Activated CD4-positive, alpha-beta memory T cell treated with anti-CD3 and anti-CD28 coated beads for 36 hours (primary cell): ENCODE measurements at regions of chr3 and their contacts with region 1.

Region 1: DNA sequence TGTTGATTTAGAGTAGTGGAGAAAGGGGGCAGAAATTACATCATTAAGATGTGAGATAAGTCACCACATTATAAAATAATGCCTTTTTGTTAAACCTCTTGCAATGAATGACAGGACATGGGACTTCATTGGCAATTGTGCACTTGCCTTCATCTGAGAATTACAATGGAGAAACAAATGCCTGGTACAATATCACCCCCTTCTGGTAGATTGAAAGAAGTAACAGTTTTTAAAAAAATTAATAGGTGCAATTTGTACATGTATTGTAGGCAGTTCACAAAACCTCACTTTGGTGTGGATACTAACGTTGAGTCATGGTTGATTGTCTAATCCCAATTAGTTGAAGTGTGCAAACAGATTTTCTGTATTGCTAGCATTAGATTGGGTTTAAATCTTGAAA is 4.6 kb upstream of the P2RY14 start:
- DNase-seq: no peak
- H3K4me3 Mint-ChIP-seq: no peak overlapping the region
- H3K27ac Mint-ChIP-seq: peak overlapping the region; percentile 62
- H3K4me1 Mint-ChIP-seq: peaks cover 32% of the 10 kb centered on the region
- H3K27me3 Mint-ChIP-seq: no peaks in the 10 kb centered on the region

Region 2: DNA sequence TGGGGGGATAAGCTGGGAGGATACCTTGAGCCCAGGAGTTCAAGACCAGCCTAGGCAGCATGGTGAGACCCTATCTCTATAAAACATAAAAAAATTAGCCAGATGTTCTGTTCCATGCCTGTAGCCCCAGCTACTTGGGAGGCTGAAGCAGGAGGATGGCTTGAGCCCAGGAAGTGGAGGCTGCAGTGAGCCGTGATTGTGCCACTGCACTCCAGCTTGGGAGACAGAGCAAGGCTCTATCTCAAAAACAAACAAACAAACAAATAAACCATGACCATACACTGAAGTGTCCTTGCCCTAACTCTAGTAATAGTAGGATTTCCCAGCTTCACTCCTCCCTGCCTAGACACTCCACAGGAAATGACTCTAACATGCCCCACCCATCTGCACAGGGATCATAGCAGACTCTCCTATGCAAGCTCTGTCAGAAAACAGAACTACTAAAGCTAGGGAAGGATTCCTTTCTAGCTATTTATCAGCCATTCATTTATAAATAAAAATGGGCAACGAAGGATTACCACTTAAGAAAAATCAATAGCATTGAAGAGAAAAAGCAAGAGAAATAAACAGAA is 583.8 kb before region 1 on chr3:
- CTCF ChIA-PET with region 1: no interaction called
- POLR2A ChIA-PET with region 1: no interaction called
- intact Hi-C with region 1: no loop called
- DNase-seq: no peak
- H3K4me3 Mint-ChIP-seq: no peak overlapping the region
- H3K27ac Mint-ChIP-seq: no peak overlapping the region
- H3K4me1 Mint-ChIP-seq: peaks cover 21% of the 10 kb centered on the region
- H3K27me3 Mint-ChIP-seq: no peaks in the 10 kb centered on the region

Region 3: GRCh38 chr3:151156618-151157216 is 126.2 kb before region 1 on chr3:
- CTCF ChIA-PET with region 1: interaction called, 18 read pairs
- POLR2A ChIA-PET with region 1: no interaction called
- intact Hi-C with region 1: no loop called
- DNase-seq: no peak
- H3K4me3 Mint-ChIP-seq: no peak overlapping the region
- H3K27ac Mint-ChIP-seq: no peak overlapping the region
- H3K4me1 Mint-ChIP-seq: no peaks in the 10 kb centered on the region
- H3K27me3 Mint-ChIP-seq: no peaks in the 10 kb centered on the region

Region 4: DNA sequence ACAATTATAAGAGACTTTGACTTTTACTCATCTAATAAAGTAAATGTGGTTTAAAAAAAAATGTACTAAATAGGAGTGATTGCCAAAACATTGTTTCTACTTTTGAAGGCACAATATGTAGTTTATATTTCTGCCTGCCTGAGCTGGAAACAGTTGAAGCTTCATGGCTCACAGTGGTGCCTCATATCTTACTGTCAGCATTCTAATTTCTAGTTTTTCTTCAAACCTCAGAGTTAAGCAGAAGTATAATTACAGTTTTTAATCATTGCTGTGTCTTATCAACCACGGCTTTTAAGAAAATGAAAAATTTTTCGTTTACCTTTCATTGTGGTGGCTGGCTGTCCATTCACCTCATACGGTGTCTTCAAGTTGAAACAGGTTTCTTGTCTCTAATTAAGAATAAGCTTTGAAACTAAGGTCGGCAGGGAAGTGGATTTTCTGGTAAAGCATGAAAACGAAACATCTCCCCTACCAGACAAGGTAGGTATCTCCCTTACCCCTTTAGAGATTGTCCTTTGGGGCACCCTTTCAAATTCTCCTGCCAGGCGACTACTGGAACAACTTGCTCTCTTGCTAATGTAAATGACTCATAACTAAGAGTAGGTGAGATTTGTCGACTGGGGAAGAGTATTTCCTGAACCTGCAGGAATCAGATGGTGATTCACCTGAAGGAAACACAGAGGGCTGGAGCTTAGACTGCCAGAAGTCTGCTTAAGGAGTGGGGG is 33.5 kb after region 1 on chr3 and contains the start of gene GPR87:
- CTCF ChIA-PET with region 1: interaction called, 3 read pairs
- POLR2A ChIA-PET with region 1: interaction called, 4 read pairs
- intact Hi-C with region 1: loop called (anchors 1 kb)
- DNase-seq: peak; percentile 61
- H3K4me3 Mint-ChIP-seq: peak within 1 kb of the TSS; percentile 17
- H3K27ac Mint-ChIP-seq: peak within 1 kb of the TSS; percentile 68
- H3K4me1 Mint-ChIP-seq: peaks cover 24% of the 10 kb centered on the region
- H3K27me3 Mint-ChIP-seq: peaks cover 8% of the 10 kb centered on the region
- total RNA-seq, gene GPR87: 1.1 TPM

Region 5: DNA sequence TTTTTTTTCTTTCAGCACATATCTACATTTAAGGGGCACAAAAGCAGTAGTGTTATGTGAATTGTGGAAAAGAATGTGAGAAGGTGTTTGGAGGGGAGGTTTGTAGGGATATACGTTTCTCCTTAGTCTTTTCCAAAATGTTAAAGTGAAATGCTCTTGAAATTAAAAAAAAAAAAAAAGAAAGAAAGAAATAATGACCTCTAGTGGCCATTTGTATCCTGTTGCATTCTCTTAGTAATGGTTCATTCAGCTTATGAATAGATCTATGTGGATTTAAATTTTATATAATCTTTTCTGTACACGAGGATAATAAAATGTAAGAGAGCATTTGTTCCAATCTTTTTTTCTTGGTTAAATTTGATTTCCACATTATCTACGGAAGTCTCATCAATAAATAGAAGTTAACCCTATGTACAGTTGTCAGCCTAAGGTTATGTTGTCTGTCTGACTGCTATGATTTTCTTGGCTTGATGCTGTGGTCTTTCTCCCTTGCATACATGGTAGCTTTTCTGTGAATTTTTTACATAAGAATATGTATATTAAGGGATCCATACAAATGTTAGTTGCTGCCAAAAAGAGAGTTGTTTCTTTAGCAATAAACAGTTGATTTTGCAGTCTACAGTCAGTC is 44.8 kb after region 1 on chr3:
- CTCF ChIA-PET with region 1: interaction called, 8 read pairs
- POLR2A ChIA-PET with region 1: no interaction called
- intact Hi-C with region 1: loop called (anchors 2 kb)
- DNase-seq: no peak
- H3K4me3 Mint-ChIP-seq: no peak overlapping the region
- H3K27ac Mint-ChIP-seq: no peak overlapping the region
- H3K4me1 Mint-ChIP-seq: peaks cover 11% of the 10 kb centered on the region
- H3K27me3 Mint-ChIP-seq: peaks cover 13% of the 10 kb centered on the region